H1 (cell line): ENCODE measurements at regions of chr1 and their contacts with region 1.

Region 1: DNA sequence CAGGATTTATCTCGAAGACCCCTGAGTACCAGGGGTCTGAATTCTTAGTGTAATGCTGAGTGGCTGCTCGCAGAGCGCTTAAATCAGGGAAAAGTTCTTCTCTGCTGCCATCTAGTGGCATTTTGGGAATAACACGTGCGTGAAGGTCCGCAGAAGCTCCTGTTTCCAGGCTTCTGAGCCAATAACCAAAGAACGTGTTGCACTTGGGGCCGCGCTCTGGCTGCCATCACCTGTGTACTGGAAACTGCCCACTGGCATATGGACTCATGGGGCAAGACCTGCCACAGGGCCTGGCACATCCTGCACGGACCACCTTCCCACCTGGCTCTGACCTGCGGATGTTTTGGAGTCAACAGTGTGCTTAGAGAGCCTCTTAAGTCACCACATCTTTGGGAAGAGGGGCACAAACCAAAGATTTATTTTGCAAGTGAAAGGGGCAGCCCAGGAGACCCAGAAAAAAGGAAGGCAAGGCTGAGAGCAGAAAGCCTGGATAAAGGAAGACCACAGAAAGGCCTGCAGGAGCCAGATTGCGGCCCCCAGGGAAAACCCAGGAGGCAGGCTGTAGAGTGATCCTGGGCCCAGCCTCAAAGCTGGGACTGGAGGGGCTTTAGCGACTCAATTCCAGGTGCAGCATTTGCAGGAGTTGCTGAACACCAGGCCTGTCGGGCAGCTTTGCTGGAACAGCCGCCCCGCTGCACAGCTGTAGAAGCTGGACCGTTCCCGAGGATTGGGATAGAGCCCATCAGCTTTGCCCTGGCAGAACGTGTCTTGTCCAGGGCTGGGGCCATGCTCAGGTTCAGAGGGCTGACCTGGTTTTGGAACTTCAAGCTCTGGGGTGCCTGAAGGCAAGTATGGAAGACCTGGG is 13.0 kb downstream of the CHIT1 start:
- DNase-seq: peak; percentile 71 to 86
- H3K4me3 ChIP-seq: peak overlapping the region in 2 of 4 experiments; percentile 17 to 40; a peak in 3 of 8 replicates
- H3K27ac ChIP-seq: no peak overlapping the region
- H3K4me1 ChIP-seq: peaks cover 0 to 12% (median 11%) of the 10 kb centered on the region in 4 experiments; a peak in 6 of 7 replicates
- H3K27me3 ChIP-seq: no peaks in the 10 kb centered on the region
- CTCF ChIP-seq: peak; percentile 29 to 85 (median 78)
- EP300 ChIP-seq: no peak
- POLR2A ChIP-seq: no peak
- RAD21 ChIP-seq: peak; percentile 87 to 91

Region 2: DNA sequence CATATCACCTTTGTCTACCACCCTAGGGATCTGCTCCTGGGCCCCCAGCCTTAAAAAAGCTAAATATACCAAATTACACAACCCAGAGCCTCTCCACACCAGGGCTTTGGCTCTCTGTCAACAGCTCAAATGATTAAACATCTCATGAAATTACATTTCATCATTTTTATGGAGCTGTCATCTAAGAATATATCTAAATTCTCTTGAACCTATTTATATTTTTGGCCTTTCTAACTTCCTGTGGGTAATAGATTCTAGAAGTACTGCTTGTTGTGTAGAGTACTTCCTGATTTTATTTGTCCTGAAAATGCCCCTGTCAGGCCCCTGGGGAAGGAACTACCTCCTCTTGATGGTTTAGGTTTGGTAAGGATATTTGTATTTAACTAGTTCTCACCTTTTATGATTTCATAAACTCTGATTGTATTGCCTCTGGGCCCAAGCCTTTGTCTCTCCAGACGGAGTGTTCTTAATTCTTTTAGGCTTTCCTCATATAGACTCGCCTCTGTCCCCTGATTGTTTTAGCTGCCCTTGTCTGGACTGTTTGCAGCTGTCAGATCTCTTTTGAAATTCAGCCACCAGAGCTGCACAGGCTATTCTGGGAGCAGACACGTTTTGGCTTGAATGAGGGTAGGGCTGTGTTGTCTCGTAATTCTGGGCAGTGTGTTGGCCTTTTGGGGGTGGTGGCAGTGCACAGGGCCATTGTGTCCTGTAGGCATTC is 147.3 kb before region 1 on chr1:
- CTCF ChIA-PET with region 1: interaction called, 35 read pairs
- POLR2A ChIA-PET with region 1: no interaction called
- DNase-seq: no peak
- H3K4me3 ChIP-seq: no peak overlapping the region
- H3K27ac ChIP-seq: no peak overlapping the region
- H3K4me1 ChIP-seq: no peaks in the 10 kb centered on the region
- H3K27me3 ChIP-seq: peaks cover 0 to 2% (median 0%) of the 10 kb centered on the region in 4 experiments; a peak in 4 of 7 replicates
- CTCF ChIP-seq: no peak
- EP300 ChIP-seq: no peak
- POLR2A ChIP-seq: no peak
- RAD21 ChIP-seq: no peak

Region 3: GRCh38 chr1:203117611-203118575 is 98.6 kb before region 1 on chr1:
- CTCF ChIA-PET with region 1: interaction called, 479 read pairs
- POLR2A ChIA-PET with region 1: interaction called, 4 read pairs
- DNase-seq: peak; percentile 76 to 93
- H3K4me3 ChIP-seq: peak overlapping the region in 3 of 4 experiments; percentile 25 to 43 (median 32); a peak in 4 of 8 replicates
- H3K27ac ChIP-seq: no peak overlapping the region
- H3K4me1 ChIP-seq: peaks cover 0 to 2% (median under 1%) of the 10 kb centered on the region in 4 experiments; a peak in 1 of 7 replicates
- H3K27me3 ChIP-seq: peaks cover 0 to 6% (median 3%) of the 10 kb centered on the region in 4 experiments; a peak in 4 of 7 replicates
- CTCF ChIP-seq: peak; percentile 83 to 97 (median 92)
- EP300 ChIP-seq: peak in 1 of 2 experiments; percentile 29; a peak in 1 of 3 replicates
- POLR2A ChIP-seq: no peak
- RAD21 ChIP-seq: peak; percentile 98

Region 4: DNA sequence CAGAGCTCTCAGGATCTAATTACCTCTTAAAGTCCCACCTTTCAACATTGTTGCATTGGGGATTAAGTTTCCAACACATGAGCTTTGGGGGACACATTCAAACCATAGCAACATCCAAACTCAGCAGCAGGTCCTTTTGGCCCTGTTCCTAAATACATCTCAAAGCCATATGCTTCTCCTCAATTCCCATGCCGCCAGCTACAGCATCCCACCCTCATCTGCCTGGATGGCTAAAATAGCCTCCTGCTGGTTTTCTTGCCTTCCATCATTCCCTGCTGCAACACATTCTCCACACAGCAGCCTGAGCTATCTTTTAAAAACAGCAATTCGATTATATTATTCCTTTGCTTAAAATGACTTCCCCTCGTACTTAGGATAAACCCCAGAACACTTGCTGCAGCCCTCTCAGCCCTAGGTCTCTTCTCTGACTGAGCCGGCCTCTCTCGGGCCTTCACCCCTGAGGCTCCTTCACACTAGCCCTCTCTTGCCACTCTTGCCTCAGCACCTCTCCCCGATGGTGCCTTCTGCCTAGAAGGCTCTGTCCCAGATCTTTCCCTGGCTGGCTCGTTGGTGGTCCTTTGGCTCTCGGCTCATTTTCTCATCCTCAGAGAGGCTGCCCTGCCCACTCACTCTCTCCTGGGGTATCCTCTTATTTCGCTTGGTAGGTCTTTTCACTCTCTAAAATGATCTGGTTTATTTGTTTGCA is 57.4 kb before region 1 on chr1:
- CTCF ChIA-PET with region 1: interaction called, 56 read pairs
- POLR2A ChIA-PET with region 1: no interaction called
- DNase-seq: no peak
- H3K4me3 ChIP-seq: no peak overlapping the region
- H3K27ac ChIP-seq: no peak overlapping the region
- H3K4me1 ChIP-seq: peaks cover 0 to 6% (median 2%) of the 10 kb centered on the region in 4 experiments; a peak in 3 of 7 replicates
- H3K27me3 ChIP-seq: no peaks in the 10 kb centered on the region; a peak in 1 of 7 replicates
- CTCF ChIP-seq: no peak
- EP300 ChIP-seq: no peak
- POLR2A ChIP-seq: no peak
- RAD21 ChIP-seq: no peak

Region 5: GRCh38 chr1:203186446-203187303 is 29.8 kb before region 1 on chr1 and contains the start of gene CHI3L1:
- CTCF ChIA-PET with region 1: interaction called, 33 read pairs
- POLR2A ChIA-PET with region 1: no interaction called
- DNase-seq: no peak
- H3K4me3 ChIP-seq: no peak within 1 kb of the TSS
- H3K27ac ChIP-seq: no peak within 1 kb of the TSS
- H3K4me1 ChIP-seq: peaks cover 6 to 17% (median 11%) of the 10 kb centered on the region in 4 experiments
- H3K27me3 ChIP-seq: no peaks in the 10 kb centered on the region
- CTCF ChIP-seq: no peak
- EP300 ChIP-seq: no peak
- POLR2A ChIP-seq: no peak
- RAD21 ChIP-seq: no peak
- total RNA-seq, gene CHI3L1: not detected in 2 replicates

Region 6: DNA sequence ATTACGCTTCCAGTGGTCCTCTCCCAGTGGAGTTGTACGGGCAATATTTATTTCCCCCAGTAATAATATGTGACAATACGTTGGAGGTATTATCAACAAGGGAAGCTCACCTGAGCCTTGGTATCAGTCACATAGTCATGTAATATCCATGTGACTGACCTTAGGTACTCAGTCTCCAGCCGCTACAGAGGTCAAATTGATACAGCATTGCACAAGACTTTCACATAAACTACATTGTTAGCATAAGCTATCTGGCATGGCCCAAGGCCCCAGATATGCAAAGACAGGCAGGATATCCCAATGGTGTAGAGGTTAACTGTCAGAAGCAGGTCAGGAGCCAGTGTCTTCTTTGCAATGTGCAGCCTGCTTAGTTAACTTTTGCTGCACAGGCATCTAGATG is 28.3 kb after region 1 on chr1:
- CTCF ChIA-PET with region 1: interaction called, 12 read pairs
- POLR2A ChIA-PET with region 1: no interaction called
- DNase-seq: no peak
- H3K4me3 ChIP-seq: no peak overlapping the region
- H3K27ac ChIP-seq: no peak overlapping the region
- H3K4me1 ChIP-seq: no peaks in the 10 kb centered on the region
- H3K27me3 ChIP-seq: no peaks in the 10 kb centered on the region; a peak in 1 of 7 replicates
- CTCF ChIP-seq: no peak
- EP300 ChIP-seq: no peak
- POLR2A ChIP-seq: no peak
- RAD21 ChIP-seq: no peak

Region 7: GRCh38 chr1:203351037-203352013 is 134.8 kb after region 1 on chr1 and contains the start of gene FMOD:
- CTCF ChIA-PET with region 1: no interaction called
- POLR2A ChIA-PET with region 1: no interaction called
- DNase-seq: no peak
- H3K4me3 ChIP-seq: no peak within 1 kb of the TSS
- H3K27ac ChIP-seq: no peak within 1 kb of the TSS
- H3K4me1 ChIP-seq: no peaks in the 10 kb centered on the region
- H3K27me3 ChIP-seq: no peaks in the 10 kb centered on the region; a peak in 1 of 7 replicates
- CTCF ChIP-seq: peak in 2 of 3 experiments; percentile 34 to 45; a peak in 3 of 4 replicates
- EP300 ChIP-seq: no peak
- POLR2A ChIP-seq: no peak
- RAD21 ChIP-seq: peak in 1 of 2 experiments; percentile 34; a peak in 1 of 4 replicates
- total RNA-seq, gene FMOD: 0.27 and 0.32 TPM in 2 replicates

Region 8: GRCh38 chr1:203497269-203497777 is 280.8 kb after region 1 on chr1:
- CTCF ChIA-PET with region 1: no interaction called
- POLR2A ChIA-PET with region 1: no interaction called
- DNase-seq: no peak
- H3K4me3 ChIP-seq: no peak overlapping the region
- H3K27ac ChIP-seq: no peak overlapping the region
- H3K4me1 ChIP-seq: peaks cover 0 to 5% (median under 1%) of the 10 kb centered on the region in 4 experiments; a peak in 3 of 7 replicates
- H3K27me3 ChIP-seq: no peaks in the 10 kb centered on the region; a peak in 1 of 7 replicates
- CTCF ChIP-seq: no peak
- EP300 ChIP-seq: no peak
- POLR2A ChIP-seq: no peak
- RAD21 ChIP-seq: no peak